ENCODE measurements at regions of chr19 and their contacts with region 1.

Region 1: DNA sequence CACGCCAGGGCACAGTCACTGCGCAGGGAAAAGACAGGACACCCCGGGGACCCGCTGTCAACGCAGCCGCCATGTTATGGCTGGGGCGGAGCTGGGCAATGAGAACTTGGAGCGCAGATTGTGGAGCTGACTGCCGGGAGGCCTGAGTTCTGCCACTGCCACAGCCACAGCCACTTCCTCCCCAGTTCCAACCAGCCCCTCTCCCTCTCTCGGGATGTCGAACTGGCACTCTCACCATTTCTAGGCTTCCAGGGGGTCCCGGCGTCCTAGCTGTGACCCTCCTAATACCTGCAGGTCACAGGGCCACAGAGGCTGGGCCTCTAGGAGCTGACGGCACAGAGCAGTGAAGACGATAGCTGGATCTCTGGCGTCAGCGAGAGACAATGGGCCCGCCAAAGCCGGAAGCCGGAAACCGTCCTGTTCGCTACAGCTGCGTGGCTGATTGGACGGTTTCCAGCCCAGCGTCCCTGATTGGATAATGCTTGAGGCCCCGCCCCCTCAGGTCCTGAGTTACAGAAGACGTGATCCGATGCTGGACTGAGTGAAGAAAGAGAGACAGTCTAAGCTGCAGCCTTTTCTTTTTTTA is at the start of gene ZNF506:
- DNase-seq: peak; percentile 97 to 99
- ATAC-seq: peak; percentile 86 to 95 (median 89)
- H3K4me3 ChIP-seq: peak within 1 kb of the TSS; percentile 82
- H3K4me3 Mint-ChIP-seq: peak within 1 kb of the TSS; percentile 98
- H3K27ac ChIP-seq: peak within 1 kb of the TSS; percentile 97
- H3K27ac Mint-ChIP-seq: peak within 1 kb of the TSS; percentile 99
- H3K4me1 ChIP-seq: peaks cover 26% of the 10 kb centered on the region
- H3K4me1 Mint-ChIP-seq: peaks cover 27 to 31% of the 10 kb centered on the region in 2 donors
- H3K27me3 ChIP-seq: no peaks in the 10 kb centered on the region
- H3K27me3 Mint-ChIP-seq: no peaks in the 10 kb centered on the region
- CTCF ChIP-seq: no peak
- total RNA-seq, gene ZNF506: 35.0 to 62.8 (median 44.0) TPM

Region 2: GRCh38 chr19:19618219-19619051 is 203.0 kb before region 1 on chr19 and contains the start of gene PBX4:
- intact Hi-C with region 1: loop called (anchors 2 kb)
- DNase-seq: peak; percentile 98 to 100
- ATAC-seq: peak; percentile 91 to 99 (median 94)
- H3K4me3 ChIP-seq: peak within 1 kb of the TSS; percentile 50
- H3K4me3 Mint-ChIP-seq: peak within 1 kb of the TSS; percentile 92
- H3K27ac ChIP-seq: peak within 1 kb of the TSS; percentile 67
- H3K27ac Mint-ChIP-seq: peak within 1 kb of the TSS; percentile 90 to 94
- H3K4me1 ChIP-seq: peaks cover 39% of the 10 kb centered on the region
- H3K4me1 Mint-ChIP-seq: peaks cover 39 to 45% of the 10 kb centered on the region in 2 donors
- H3K27me3 ChIP-seq: no peaks in the 10 kb centered on the region
- H3K27me3 Mint-ChIP-seq: no peaks in the 10 kb centered on the region
- CTCF ChIP-seq: no peak
- total RNA-seq, gene PBX4: 10.7 to 15.9 (median 11.1) TPM

Region 3: DNA sequence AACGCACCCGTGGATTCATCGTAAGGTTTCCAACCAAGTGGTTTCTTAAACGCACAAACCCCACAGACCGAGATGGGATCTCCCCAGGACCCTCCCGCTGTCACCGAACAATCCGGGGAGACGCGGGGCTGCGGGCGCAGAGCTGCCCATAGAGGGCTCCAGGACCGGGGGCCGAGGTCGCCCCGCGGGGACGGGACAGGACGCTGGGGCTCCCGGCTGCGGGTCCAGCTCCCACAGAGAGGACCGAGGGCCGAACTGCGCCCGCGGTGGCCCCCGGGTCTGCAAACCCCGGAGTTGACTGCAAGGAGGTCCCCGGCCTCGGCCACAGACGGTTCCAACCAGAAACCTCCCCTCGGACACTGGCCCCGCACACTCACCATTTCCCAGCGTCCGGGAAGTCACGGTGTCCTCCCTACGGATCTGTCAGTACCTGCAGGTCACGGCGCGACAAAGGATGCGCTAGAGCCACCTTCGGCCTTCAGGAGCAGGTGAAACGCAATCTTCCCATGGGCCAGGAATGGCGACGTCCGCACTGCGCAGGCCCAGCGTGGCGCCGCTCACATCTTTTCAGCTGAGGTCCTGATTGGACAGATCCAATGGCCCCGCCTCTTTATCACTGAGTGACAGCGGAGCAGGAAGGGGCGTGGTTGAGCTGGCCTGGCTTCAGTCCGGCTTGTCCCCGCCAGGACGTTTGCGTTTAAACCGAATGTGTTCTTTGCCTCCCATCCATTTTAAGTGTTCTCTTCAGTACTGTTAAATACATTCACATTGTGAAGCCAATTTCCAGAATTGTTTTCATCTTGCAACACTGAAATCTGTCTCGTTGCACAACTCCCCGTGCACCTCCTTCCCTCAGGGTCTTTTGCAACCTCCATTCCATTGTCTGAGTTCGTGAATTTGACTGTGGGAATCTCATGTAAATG is 88.6 kb before region 1 on chr19 and contains the start of gene ZNF14:
- intact Hi-C with region 1: loop called (anchors 5 kb)
- DNase-seq: peak; percentile 90 to 96
- ATAC-seq: peak; percentile 100
- H3K4me3 ChIP-seq: peak within 1 kb of the TSS; percentile 96
- H3K4me3 Mint-ChIP-seq: peak within 1 kb of the TSS; percentile 99
- H3K27ac ChIP-seq: peak within 1 kb of the TSS; percentile 73
- H3K27ac Mint-ChIP-seq: peak within 1 kb of the TSS; percentile 93 to 96
- H3K4me1 ChIP-seq: peaks cover 18% of the 10 kb centered on the region
- H3K4me1 Mint-ChIP-seq: peaks cover 17 to 36% of the 10 kb centered on the region in 2 donors
- H3K27me3 ChIP-seq: no peaks in the 10 kb centered on the region
- H3K27me3 Mint-ChIP-seq: no peaks in the 10 kb centered on the region
- CTCF ChIP-seq: no peak
- total RNA-seq, gene ZNF14: 12.7 to 18.6 (median 14.0) TPM

Region 4: GRCh38 chr19:19788015-19788414 is 33.4 kb before region 1 on chr19:
- intact Hi-C with region 1: no loop called
- DNase-seq: no peak
- ATAC-seq: no peak
- H3K4me3 ChIP-seq: no peak overlapping the region
- H3K4me3 Mint-ChIP-seq: no peak overlapping the region
- H3K27ac ChIP-seq: no peak overlapping the region
- H3K27ac Mint-ChIP-seq: no peak overlapping the region
- H3K4me1 ChIP-seq: no peaks in the 10 kb centered on the region
- H3K4me1 Mint-ChIP-seq: peaks cover 16% of the 10 kb centered on the region in 2 donors
- H3K27me3 ChIP-seq: no peaks in the 10 kb centered on the region
- H3K27me3 Mint-ChIP-seq: no peaks in the 10 kb centered on the region
- CTCF ChIP-seq: no peak

Region 5: DNA sequence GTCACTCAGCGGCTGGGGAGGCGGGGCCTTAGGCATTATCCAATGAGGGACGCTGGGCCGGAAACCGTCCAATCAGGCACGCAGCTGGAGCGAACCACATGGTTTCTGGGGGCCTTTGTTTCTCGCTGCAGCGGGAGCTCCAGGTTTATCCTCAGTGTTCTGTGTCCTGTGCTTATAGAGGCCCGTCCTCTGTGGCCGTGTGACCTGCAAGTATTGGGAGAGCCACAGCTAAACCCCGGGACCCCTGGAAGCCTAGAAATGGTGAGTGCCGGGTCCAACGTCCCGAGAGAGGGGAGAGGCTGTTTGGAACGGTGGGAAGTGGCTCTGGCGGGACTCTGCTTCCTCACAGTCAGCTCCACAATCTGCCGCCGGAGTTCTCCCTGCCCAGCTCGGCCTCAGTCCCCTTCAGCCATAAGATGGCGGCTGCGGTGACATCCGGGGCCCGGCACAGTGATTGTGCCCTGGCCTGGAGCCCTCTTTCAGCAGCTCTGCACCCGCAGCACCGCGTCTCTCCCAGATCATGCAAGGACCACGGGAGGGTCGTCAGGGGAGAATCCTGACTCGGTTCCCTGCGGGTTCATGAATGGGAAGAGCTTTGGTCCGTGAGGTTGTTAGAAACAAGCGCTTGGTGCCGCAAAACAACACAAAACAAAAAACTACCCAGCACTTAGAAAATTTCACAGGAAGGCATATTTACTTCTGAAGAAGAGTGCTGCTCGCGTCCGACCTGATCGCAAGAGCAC is 44.5 kb after region 1 on chr19 and contains the start of gene ZNF253:
- intact Hi-C with region 1: loop called (anchors 1 kb)
- DNase-seq: peak; percentile 94 to 96
- ATAC-seq: peak; percentile 88 to 97 (median 89)
- H3K4me3 ChIP-seq: peak within 1 kb of the TSS; percentile 95
- H3K4me3 Mint-ChIP-seq: peak within 1 kb of the TSS; percentile 99
- H3K27ac ChIP-seq: peak within 1 kb of the TSS; percentile 91
- H3K27ac Mint-ChIP-seq: peak within 1 kb of the TSS; percentile 97 to 98
- H3K4me1 ChIP-seq: peaks cover 16% of the 10 kb centered on the region
- H3K4me1 Mint-ChIP-seq: peaks cover 43 to 51% of the 10 kb centered on the region in 2 donors
- H3K27me3 ChIP-seq: no peaks in the 10 kb centered on the region
- H3K27me3 Mint-ChIP-seq: peaks cover 0 to 3% of the 10 kb centered on the region in 2 donors
- CTCF ChIP-seq: no peak
- total RNA-seq, gene ZNF253: 8.6 to 14.7 (median 10.1) TPM

Region 6: GRCh38 chr19:20565321-20566018 is 744.0 kb after region 1 on chr19 and contains the start of gene ZNF737:
- intact Hi-C with region 1: loop called (anchors 5 kb)
- DNase-seq: peak; percentile 90 to 97
- ATAC-seq: peak; percentile 90 to 95 (median 92)
- H3K4me3 ChIP-seq: peak within 1 kb of the TSS; percentile 78
- H3K4me3 Mint-ChIP-seq: peak within 1 kb of the TSS; percentile 100
- H3K27ac ChIP-seq: peak within 1 kb of the TSS; percentile 84
- H3K27ac Mint-ChIP-seq: peak within 1 kb of the TSS; percentile 99 to 100
- H3K4me1 ChIP-seq: peaks cover 11% of the 10 kb centered on the region
- H3K4me1 Mint-ChIP-seq: peaks cover 31 to 36% of the 10 kb centered on the region in 2 donors
- H3K27me3 ChIP-seq: no peaks in the 10 kb centered on the region
- H3K27me3 Mint-ChIP-seq: no peaks in the 10 kb centered on the region
- CTCF ChIP-seq: no peak
- total RNA-seq, gene ZNF737: 10.1 to 16.5 (median 13.7) TPM